ENCODE measurements at regions of chr10 and their contacts with region 1.

Region 1: GRCh38 chr10:47311932-47312662 is 10.2 kb upstream of the GDF2 start:
- DNase-seq: peak; percentile 87 to 90
- H3K4me3 ChIP-seq: no peak overlapping the region
- H3K4me3 Mint-ChIP-seq: no peak overlapping the region
- H3K27ac Mint-ChIP-seq: no peak overlapping the region
- H3K4me1 ChIP-seq: no peaks in the 10 kb centered on the region
- H3K4me1 Mint-ChIP-seq: no peaks in the 10 kb centered on the region
- H3K27me3 ChIP-seq: no peaks in the 10 kb centered on the region; the same call in 1 of the 2 replicates
- H3K27me3 Mint-ChIP-seq: peaks cover 19% of the 10 kb centered on the region
- CTCF ChIP-seq: peak; percentile 95 to 99

Region 2: DNA sequence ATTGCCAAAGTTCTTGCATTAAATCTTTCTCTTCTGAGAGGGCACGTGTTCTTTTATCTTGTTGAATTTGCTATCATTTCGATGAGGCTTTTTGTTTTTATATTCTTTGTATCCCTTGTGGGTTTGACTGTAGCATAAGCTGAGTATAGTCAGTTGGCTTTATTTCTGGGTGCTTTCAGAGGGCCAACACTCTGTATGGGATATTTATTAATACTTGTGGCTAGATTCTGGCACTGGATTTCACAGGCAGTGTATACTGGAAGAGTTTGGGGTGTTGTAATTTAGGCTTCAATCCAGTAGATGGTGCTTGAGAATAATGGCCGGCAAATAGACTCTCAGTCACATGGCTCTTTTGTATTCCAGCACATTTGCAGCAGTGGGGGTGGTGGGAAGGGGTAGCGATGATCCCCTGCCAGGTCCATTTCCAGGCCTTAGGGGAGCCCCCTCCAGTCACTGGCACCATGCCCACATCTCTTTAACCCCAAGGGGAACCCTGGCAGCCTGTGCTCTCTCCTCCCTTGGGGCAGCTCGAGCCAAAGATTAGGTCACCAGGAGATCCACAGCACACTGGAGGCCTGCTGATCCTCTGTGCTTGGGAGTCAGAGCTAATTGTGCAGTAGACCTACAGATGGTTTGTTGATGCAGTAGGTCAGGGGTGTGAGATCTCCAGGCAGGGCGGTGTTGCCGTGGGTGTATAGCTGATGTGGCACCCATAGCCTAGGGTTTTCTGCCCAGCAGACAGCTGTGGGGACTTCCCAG is 319.1 kb before region 1 on chr10:
- CTCF ChIA-PET with region 1: interaction called, 21 read pairs
- POLR2A ChIA-PET with region 1: no interaction called
- intact Hi-C with region 1: loop called (anchors 2 kb)
- DNase-seq: peak in 1 of 2 experiments; percentile 49
- H3K4me3 ChIP-seq: no peak overlapping the region
- H3K4me3 Mint-ChIP-seq: no peak overlapping the region
- H3K27ac Mint-ChIP-seq: no peak overlapping the region
- H3K4me1 ChIP-seq: no peaks in the 10 kb centered on the region
- H3K4me1 Mint-ChIP-seq: no peaks in the 10 kb centered on the region
- H3K27me3 ChIP-seq: no peaks in the 10 kb centered on the region
- H3K27me3 Mint-ChIP-seq: peaks cover 2% of the 10 kb centered on the region
- CTCF ChIP-seq: peak; percentile 72 to 76

Region 3: DNA sequence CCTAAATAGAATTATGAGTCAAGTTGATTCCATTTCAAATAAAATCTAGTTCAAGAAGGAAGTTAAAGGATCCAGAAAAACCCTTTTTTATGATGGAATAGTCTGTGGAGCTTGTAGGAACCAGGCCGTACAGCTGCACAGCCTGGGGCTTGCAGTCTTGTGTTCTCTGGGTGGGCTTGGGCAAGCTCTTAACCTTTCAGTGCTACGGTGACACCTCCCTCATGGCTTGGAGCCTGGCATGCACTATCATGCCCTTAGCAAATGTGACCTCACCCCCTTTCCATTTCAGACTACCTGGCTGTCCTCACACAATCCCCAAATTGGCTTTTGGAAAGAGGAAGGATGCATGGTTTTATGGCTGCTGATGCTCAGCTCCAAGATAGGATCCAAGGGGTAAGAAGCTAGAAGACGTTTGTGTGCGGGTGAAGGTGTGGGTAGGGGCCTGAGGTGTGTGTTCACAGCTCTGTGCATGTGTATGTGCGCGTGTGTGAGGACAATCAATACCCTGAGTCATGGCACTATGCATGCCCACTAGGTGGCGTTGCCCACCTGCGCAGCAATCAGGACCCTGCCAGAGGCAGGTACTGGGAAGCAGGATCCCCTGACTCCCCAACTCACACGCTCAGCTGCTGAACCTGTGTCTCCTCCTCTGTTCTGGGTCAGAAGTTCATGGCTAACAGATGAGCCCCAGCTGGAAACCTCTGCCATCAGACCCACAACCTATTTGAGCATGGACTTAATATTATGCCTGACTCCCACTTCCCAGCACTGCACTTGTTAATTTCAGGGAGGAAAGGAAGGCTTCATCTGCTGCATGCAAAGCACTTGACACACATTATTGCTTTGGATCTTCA is 287.5 kb before region 1 on chr10:
- CTCF ChIA-PET with region 1: interaction called, 33 read pairs
- POLR2A ChIA-PET with region 1: no interaction called
- intact Hi-C with region 1: loop called (anchors 1 kb)
- DNase-seq: peak; percentile 81 to 87
- H3K4me3 ChIP-seq: no peak overlapping the region
- H3K4me3 Mint-ChIP-seq: no peak overlapping the region
- H3K27ac Mint-ChIP-seq: no peak overlapping the region
- H3K4me1 ChIP-seq: no peaks in the 10 kb centered on the region
- H3K4me1 Mint-ChIP-seq: no peaks in the 10 kb centered on the region
- H3K27me3 ChIP-seq: no peaks in the 10 kb centered on the region
- H3K27me3 Mint-ChIP-seq: peaks cover 4% of the 10 kb centered on the region
- CTCF ChIP-seq: peak; percentile 99

Region 4: GRCh38 chr10:47047671-47048525 is 264.2 kb before region 1 on chr10:
- CTCF ChIA-PET with region 1: interaction called, 79 read pairs
- POLR2A ChIA-PET with region 1: no interaction called
- intact Hi-C with region 1: loop called (anchors 1 kb)
- DNase-seq: peak; percentile 74 to 86
- H3K4me3 ChIP-seq: no peak overlapping the region
- H3K4me3 Mint-ChIP-seq: no peak overlapping the region
- H3K27ac Mint-ChIP-seq: no peak overlapping the region
- H3K4me1 ChIP-seq: no peaks in the 10 kb centered on the region
- H3K4me1 Mint-ChIP-seq: no peaks in the 10 kb centered on the region
- H3K27me3 ChIP-seq: no peaks in the 10 kb centered on the region
- H3K27me3 Mint-ChIP-seq: peaks cover 26% of the 10 kb centered on the region
- CTCF ChIP-seq: peak; percentile 97 to 99

Region 5: GRCh38 chr10:47322300-47323061 is 10.4 kb after region 1 on chr10 and contains the start of gene GDF2:
- CTCF ChIA-PET with region 1: interaction called, 10 read pairs
- POLR2A ChIA-PET with region 1: no interaction called
- intact Hi-C with region 1: no loop called
- DNase-seq: peak in 1 of 2 experiments; percentile 29
- H3K4me3 ChIP-seq: no peak within 1 kb of the TSS
- H3K4me3 Mint-ChIP-seq: no peak within 1 kb of the TSS
- H3K27ac Mint-ChIP-seq: no peak within 1 kb of the TSS
- H3K4me1 ChIP-seq: no peaks in the 10 kb centered on the region
- H3K4me1 Mint-ChIP-seq: peaks cover 6% of the 10 kb centered on the region
- H3K27me3 ChIP-seq: no peaks in the 10 kb centered on the region
- H3K27me3 Mint-ChIP-seq: peaks cover 22% of the 10 kb centered on the region
- CTCF ChIP-seq: no peak
- total RNA-seq, gene GDF2: not detected in 2 replicates

Region 6: DNA sequence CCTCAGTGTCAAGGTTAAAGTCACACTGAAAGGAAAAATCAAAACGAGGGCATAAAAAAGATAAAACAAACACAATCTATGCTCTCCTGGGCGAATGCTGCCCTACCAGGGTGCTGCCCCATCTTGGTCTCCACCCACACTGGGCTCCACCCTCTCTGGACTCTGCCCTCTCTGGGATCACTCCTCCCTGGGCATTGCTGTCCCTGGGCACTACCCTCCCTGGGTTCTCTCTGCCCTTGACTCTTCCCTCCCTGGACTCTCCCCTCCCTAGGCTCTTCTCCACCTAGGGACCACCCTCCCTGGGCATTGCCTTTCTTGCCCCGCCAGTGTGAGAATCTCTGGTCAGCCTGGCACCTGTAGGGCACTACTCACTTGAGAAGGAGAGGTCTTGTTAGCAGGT is 18.7 kb after region 1 on chr10:
- CTCF ChIA-PET with region 1: no interaction called
- POLR2A ChIA-PET with region 1: no interaction called
- intact Hi-C with region 1: loop called (anchors 1 kb)
- DNase-seq: peak in 1 of 2 experiments; percentile 36
- H3K4me3 ChIP-seq: no peak overlapping the region
- H3K4me3 Mint-ChIP-seq: no peak overlapping the region
- H3K27ac Mint-ChIP-seq: no peak overlapping the region
- H3K4me1 ChIP-seq: no peaks in the 10 kb centered on the region
- H3K4me1 Mint-ChIP-seq: no peaks in the 10 kb centered on the region
- H3K27me3 ChIP-seq: no peaks in the 10 kb centered on the region
- H3K27me3 Mint-ChIP-seq: peaks cover 11% of the 10 kb centered on the region
- CTCF ChIP-seq: no peak